ENCODE measurements at regions of chr5 and their contacts with region 1.

Region 1: DNA sequence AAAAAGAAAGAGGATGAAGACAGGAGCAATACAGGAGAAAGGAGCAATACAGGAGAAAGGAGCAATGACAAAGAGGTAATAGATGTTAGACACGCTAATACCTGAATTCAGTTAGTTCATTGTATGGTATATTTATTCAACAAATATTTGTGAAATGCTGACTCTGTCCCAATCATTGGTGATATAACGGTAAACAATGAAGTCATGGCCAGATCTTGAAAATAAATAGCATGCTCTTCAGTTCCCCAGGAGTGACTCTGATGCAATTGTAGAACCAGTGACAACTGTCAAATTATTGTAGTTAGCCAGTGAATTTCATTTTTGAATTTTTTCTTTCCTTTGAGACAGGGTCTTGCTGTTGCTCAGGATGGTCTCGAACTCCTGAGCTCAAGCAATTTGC is 48.0 kb upstream of the SPINK14 start:
- DNase-seq: no peak

Region 2: GRCh38 chr5:147949711-147950573 is 170.4 kb before region 1 on chr5:
- intact Hi-C with region 1: loop called (anchors 2 kb)
- DNase-seq: no peak

Region 3: GRCh38 chr5:148805326-148806290 is 685.3 kb after region 1 on chr5:
- intact Hi-C with region 1: no loop called
- DNase-seq: peak in 2 of 10 donors; percentile 51 to 77

Measured in posterior cingulate gyrus (tissue), 11 donors.